Kidney (tissue), 22 donors: ENCODE measurements at regions of chr1 and their contacts with region 1.

Region 1: DNA sequence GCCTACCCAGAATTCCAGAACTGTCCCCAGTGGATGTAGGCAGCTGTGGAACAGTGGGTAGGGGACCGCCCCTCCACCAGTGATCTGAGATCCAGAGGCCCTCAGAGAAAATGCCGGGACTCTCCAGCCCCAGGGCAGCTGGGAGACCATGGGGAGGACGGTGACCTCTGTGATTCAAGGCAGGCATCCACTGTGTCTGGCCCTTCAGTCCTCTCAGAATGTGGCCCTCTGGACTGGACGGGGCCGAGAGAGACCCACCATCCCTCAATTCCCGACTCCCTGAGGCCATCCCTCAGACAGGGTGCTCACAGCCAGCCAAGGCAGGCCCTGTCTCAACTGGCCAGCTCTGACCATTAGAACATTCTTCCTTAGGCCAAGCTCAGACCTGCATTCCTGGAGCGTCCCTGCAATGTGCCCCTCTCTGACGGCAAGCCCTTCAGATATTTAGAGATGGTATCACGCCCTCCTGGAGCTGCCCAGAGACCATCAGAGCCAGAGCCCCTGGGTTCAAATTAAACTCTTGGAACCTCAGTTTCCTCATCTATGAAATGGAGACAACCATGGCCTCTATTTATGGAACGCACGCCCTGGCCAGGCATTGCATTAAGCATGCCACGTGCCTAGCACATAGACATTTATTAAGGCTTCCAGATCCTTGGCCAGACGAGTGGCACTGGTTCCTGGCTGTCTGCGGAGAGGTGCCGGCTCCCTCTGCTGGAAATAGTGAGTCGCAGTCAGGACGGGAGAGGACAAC is 9.6 kb upstream of the EPS8L3 start:
- DNase-seq: peak; percentile 86 to 96 (median 92)
- H3K4me3 ChIP-seq: no peak overlapping the region
- H3K27ac ChIP-seq: no peak overlapping the region
- H3K4me1 ChIP-seq: peaks cover 0 to 3% (median 3%) of the 10 kb centered on the region in 3 donors
- H3K27me3 ChIP-seq: no peaks in the 10 kb centered on the region
- CTCF ChIP-seq: peak; percentile 94

Region 2: DNA sequence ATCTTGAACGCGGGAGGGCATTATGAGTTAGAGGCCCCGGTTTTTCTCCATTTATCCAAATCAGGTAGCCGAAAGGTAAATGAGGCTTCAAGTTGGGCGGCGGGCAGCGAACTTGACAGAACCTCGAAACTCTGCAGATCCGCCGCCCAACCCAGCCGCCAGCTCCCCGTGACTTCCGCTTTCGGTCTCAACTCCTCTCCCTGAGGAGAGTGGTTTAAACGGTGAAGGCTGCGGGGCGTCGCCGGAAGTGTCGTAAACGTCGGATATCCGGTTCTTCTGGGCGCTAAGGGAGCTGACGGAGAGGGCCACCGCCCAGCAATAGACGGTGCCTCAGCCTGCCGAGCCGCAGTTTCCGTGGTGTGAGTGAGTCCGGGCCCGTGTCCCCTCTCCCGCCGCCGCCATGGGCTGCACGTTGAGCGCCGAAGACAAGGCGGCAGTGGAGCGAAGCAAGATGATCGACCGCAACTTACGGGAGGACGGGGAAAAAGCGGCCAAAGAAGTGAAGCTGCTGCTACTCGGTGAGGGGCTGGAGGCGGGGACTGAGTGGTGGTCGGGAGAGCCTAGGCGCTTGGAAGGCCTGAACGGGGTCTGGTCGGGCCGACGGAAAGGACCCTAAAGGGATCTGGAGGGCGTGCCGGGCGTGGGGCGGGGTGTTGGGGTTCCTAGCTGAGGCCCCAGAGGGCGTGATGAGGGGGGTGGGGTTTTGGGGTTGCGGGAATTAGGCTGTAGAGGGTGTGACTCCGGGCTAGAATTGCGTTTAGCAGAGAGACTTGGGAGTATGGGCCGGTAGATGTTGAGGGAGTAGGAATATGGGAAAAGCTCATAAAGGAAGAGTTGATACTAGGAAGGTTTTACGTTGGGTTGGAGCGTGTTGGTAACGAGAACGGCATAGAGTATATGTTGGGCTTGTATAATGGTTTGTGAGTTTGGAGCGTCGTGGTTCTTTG is 224.7 kb before region 1 on chr1 and contains the start of gene GNAI3:
- intact Hi-C with region 1: loop called (anchors 5 kb)
- DNase-seq: peak; percentile 96 to 98 (median 97)
- H3K4me3 ChIP-seq: peak within 1 kb of the TSS; percentile 86 to 96 (median 91)
- H3K27ac ChIP-seq: peak within 1 kb of the TSS; percentile 95 to 97
- H3K4me1 ChIP-seq: peaks cover 7 to 13% (median 12%) of the 10 kb centered on the region in 3 donors
- H3K27me3 ChIP-seq: no peaks in the 10 kb centered on the region
- CTCF ChIP-seq: peak; percentile 4
- total RNA-seq, gene GNAI3: 8.0 TPM

Region 3: DNA sequence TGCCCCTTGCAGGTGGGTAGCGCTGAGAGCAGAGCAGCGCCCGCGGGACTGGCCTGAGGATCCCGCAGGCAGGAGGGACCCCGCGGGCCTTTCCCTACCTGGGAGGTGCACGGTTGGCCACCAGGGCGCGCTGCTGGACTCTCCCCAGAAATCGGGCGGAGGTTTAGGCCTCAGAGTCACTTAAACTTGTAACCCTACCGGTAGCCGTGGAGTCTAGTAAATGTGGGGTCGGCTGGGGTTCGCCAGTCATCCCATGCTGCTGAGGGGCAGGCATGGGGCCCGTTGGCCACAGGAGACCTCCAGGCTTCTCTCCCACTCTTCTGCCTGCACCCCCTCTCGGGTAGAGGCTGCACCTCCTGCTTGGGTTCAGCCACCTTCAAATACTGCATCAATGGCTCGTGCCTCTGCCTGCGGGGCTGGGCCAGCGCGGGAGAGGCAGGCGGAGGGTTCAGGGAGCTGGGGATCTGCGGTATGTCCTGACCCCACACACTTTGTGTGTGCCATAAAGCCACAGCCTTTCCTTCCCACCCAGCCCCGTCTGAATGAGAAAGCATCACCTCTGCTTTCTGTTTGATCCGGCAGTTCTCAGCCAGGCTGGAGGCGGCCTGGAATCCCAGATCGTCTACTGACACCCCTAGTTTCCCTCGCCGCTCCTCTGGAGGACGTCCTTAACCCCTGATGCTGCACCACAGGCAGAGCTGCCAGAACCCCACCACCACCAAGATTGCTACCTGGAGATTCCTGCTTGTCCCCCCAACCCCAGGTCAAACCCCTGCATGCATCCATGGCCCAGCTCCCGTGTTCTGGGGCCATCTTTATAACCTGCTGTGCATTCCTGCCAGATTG is 129.7 kb before region 1 on chr1:
- intact Hi-C with region 1: loop called (anchors 5 kb)
- DNase-seq: peak; percentile 84 to 91 (median 91)
- H3K4me3 ChIP-seq: peak overlapping the region in 1 of 3 donors; percentile 17
- H3K27ac ChIP-seq: no peak overlapping the region
- H3K4me1 ChIP-seq: peaks cover 0 to 5% (median 4%) of the 10 kb centered on the region in 3 donors
- H3K27me3 ChIP-seq: no peaks in the 10 kb centered on the region
- CTCF ChIP-seq: peak; percentile 90

Region 4: DNA sequence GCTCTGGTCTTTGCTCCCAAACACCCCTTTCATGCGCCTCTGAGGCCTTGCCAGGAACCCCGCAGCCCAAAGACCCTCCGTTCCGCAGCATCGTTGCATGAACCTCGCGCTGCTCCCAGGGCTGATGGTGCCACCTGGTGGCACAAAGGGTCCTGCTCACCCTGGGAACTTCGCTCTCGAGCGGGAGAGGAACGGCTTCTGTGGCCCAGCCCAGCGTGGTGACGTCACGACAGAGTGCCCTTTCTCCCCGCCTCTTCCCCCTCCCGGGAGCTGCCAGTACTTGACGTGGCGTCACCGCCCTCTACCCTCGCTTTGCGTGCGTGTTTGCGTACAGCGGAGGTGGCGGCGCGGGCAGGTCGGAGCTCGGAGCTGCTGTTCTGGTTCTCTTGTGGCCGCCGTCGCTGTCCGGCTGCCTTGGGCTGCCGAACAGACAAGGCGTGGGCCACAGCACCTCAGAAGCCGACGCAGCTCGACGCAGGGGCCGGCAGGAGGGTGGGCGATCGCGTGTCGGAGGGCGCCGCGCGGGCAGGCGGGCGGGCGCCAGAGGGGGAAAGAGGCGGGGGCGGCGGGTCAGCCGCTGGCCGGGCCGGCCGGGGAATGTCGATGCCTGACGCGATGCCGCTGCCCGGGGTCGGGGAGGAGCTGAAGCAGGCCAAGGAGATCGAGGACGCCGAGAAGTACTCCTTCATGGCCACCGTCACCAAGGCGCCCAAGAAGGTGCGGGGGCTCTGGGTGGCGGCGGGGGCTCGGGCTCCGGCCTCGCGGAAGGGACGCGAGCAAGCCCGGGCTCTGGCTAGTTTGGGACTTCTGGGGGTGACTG is 211.3 kb after region 1 on chr1 and contains the start of gene AHCYL1:
- intact Hi-C with region 1: loop called (anchors 5 kb)
- DNase-seq: peak; percentile 99 to 100 (median 99)
- H3K4me3 ChIP-seq: peak within 1 kb of the TSS; percentile 67 to 94 (median 89)
- H3K27ac ChIP-seq: peak within 1 kb of the TSS; percentile 97 to 98
- H3K4me1 ChIP-seq: peaks cover 5 to 32% (median 24%) of the 10 kb centered on the region in 3 donors
- H3K27me3 ChIP-seq: no peaks in the 10 kb centered on the region
- CTCF ChIP-seq: peak; percentile 99
- total RNA-seq, gene AHCYL1: 125 TPM